AG04450 (cell line): ENCODE measurements at regions of chr9 and their contacts with region 1.

Region 1: GRCh38 chr9:35096035-35096849 is at the start of gene PIGO:
- DNase-seq: no peak
- H3K4me3 ChIP-seq: peak within 1 kb of the TSS; percentile 93
- H3K27ac ChIP-seq: peak within 1 kb of the TSS; percentile 76
- H3K27me3 ChIP-seq: no peaks in the 10 kb centered on the region
- CTCF ChIP-seq: peak; percentile 88
- polyA plus RNA-seq, gene PIGO: 14.1 and 14.3 TPM in 2 replicates

Region 2: GRCh38 chr9:34976441-34976840 is 119.8 kb before region 1 on chr9:
- CTCF ChIA-PET with region 1: no interaction called
- POLR2A ChIA-PET with region 1: no interaction called
- DNase-seq: no peak
- H3K4me3 ChIP-seq: no peak overlapping the region
- H3K27ac ChIP-seq: no peak overlapping the region
- H3K27me3 ChIP-seq: peaks cover 39% of the 10 kb centered on the region
- CTCF ChIP-seq: no peak

Region 3: DNA sequence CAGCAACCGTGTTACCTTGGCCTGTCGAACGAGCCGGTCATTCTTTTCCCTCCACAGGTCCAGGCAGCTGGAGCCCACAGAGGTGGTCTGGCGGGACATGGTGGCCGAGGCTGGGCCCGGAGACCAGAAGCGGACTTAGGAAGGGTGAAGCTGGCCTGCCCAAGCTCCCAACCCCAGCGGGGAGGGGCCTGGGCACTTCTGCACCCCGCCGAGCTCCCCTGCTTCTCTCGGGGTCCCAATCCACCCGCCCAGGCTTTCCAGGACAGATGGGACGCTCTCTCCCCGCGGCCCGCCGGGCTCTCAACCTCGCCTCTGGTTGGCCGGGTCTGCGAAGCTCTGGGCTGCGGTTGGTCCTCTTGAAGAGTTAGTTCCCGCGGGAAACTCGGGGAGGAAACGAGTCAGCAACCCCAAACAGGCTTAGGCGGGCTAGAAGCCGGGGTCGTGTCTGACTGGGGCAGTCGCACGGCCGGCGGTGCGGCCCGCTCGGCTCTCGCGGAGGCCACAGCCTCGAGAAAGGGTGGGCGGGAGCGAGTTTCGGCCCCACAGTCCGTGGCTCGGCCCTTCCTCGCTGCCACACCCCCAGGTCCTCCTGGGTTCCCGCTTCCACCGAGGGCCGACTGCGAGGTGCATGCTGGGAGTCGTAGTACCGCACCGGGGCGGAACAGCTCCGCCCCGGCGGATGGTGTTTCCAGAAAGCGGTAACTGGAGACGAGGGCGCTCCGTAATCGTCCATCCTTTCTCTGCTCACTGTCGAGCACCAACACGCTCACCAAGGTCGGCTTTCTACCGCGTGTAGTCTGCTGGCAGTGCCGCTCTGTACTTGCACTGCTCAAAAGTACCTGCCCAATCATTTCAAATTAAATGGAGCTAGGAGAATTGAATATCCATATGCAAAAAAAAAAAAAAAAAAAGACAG is 16.6 kb before region 1 on chr9 and contains the start of gene FANCG:
- CTCF ChIA-PET with region 1: interaction called, 15 read pairs
- POLR2A ChIA-PET with region 1: interaction called, 3 read pairs
- DNase-seq: peak; percentile 69
- H3K4me3 ChIP-seq: peak within 1 kb of the TSS; percentile 81
- H3K27ac ChIP-seq: peak within 1 kb of the TSS; percentile 47
- H3K27me3 ChIP-seq: no peaks in the 10 kb centered on the region
- CTCF ChIP-seq: no peak
- polyA plus RNA-seq, gene FANCG: 8.5 and 9.1 TPM in 2 replicates

Region 4: DNA sequence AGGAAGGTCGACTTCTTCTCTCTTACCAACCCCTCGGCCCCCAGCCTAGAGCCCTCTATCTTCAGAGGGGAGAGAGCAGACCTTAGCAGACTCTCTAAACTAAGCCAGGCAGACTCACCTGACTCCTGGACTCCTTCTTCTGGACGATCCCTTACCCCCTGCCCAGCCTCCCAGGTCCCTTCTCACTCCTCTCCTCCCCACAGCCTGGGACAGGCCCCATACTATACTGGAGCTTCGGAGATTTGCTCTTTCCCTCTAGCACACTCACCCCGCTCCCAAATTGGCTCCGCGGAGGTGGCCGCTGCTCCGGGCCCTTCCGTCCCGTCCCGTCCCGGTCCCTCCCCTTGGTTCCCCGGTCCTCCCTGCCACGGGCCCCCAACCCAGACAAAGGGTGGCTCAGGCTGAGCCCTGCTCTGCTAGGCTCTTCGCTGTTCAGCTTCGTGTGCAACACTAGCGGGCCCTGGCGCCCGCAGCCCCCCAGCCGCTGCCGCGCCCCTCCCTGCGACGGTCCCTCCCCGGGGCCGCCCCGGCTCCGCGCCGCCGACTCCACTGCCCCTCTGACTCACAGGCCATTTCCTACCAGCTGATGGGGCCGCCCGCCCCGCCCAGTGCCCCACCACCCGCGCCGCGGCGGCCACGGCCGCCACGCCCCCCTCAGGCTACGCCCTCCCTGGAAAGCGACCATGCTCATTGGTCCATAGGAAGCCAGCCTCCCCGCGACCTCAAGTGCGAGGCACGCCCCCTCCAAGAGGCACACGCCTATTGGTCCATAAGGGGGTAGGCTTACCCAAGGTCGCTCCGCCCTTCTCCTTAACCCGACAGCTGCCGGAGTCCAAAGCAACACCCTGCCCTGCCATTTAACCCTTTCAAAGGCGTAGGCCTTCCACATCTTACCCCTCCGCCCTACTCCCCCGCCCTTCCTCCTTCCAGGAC is 15.0 kb after region 1 on chr9:
- CTCF ChIA-PET with region 1: interaction called, 14 read pairs
- POLR2A ChIA-PET with region 1: no interaction called
- DNase-seq: peak; percentile 97
- H3K4me3 ChIP-seq: peak overlapping the region; percentile 84
- H3K27ac ChIP-seq: peak overlapping the region; percentile 84
- H3K27me3 ChIP-seq: no peaks in the 10 kb centered on the region
- CTCF ChIP-seq: no peak

Region 5: DNA sequence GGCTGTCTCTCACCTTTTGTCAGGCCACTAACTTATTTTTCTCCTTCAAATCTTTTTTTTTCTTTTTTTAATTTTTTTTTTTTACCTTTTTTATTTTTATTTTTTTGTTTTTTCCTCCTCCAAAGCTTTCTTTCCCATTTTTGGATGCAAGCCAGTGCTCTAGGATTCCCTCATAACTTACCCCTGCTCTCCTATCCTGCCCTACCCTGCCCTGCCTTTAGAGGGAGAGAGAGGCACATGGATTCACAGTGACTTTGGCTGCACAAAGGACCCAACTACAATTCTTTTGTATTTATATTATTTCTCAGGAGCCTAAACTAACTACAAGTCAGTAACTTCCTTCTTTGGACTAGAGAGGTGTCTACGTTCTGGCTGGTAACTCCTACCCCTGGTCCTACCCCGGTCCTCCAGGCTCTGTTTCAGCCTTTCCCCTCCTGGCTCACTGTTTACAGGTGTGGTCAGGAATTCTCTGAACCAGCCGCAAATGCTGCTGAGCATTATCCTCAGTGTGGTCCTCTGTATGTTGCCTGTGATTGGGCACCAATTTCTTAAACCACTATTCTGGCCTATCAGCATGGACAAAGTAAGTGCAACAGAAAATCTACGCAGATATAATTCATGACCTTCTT is 385.2 kb after region 1 on chr9:
- CTCF ChIA-PET with region 1: interaction called, 16 read pairs
- POLR2A ChIA-PET with region 1: no interaction called
- DNase-seq: peak; percentile 52
- H3K4me3 ChIP-seq: no peak overlapping the region
- H3K27ac ChIP-seq: no peak overlapping the region
- H3K27me3 ChIP-seq: peaks cover 3% of the 10 kb centered on the region
- CTCF ChIP-seq: peak; percentile 80